GM23248 (cell line): ENCODE measurements at regions of chrX and their contacts with region 1.

Region 1: GRCh38 chrX:30275498-30275897 is 28.6 kb downstream of the MAGEB1 start:
- DNase-seq: peak; percentile 44
- H3K4me3 ChIP-seq: no peak overlapping the region
- H3K27ac ChIP-seq: no peak overlapping the region
- H3K4me1 ChIP-seq: no peaks in the 10 kb centered on the region; the same call in 1 of the 2 replicates
- H3K27me3 ChIP-seq: no peaks in the 10 kb centered on the region

Region 2: DNA sequence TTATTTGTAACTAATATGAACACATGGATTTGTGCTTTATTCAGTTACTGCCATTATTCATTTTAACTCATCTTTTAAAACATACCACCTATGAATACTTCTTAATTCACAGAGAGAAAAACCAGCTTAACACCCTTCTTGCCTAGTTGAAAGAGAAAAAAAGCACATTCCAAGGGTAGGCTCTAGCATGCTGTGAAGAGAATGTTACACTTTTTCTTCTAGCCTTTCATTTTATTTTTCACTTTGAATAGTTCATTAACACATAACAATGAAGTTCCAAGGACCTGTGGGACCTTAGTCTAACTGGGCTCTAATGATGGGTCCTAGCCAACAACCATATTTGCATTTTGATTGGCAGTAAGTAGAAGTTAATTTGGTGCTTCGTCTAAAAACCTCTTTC is 340.0 kb before region 1 on chrX:
- in situ Hi-C with region 1: no loop called
- DNase-seq: no peak
- H3K4me3 ChIP-seq: no peak overlapping the region
- H3K27ac ChIP-seq: no peak overlapping the region
- H3K4me1 ChIP-seq: no peaks in the 10 kb centered on the region
- H3K27me3 ChIP-seq: no peaks in the 10 kb centered on the region

Region 3: GRCh38 chrX:30039768-30040167 is 235.7 kb before region 1 on chrX:
- in situ Hi-C with region 1: no loop called
- DNase-seq: no peak
- H3K4me3 ChIP-seq: no peak overlapping the region
- H3K27ac ChIP-seq: no peak overlapping the region
- H3K4me1 ChIP-seq: no peaks in the 10 kb centered on the region
- H3K27me3 ChIP-seq: no peaks in the 10 kb centered on the region

Region 4: GRCh38 chrX:30504309-30504708 is 228.8 kb after region 1 on chrX:
- in situ Hi-C with region 1: loop called (anchors 10 kb)
- DNase-seq: peak; percentile 38
- H3K4me3 ChIP-seq: no peak overlapping the region
- H3K27ac ChIP-seq: no peak overlapping the region
- H3K4me1 ChIP-seq: no peaks in the 10 kb centered on the region
- H3K27me3 ChIP-seq: no peaks in the 10 kb centered on the region

Region 5: GRCh38 chrX:30652527-30653414 is 377.3 kb after region 1 on chrX:
- in situ Hi-C with region 1: no loop called
- DNase-seq: peak; percentile 95
- H3K4me3 ChIP-seq: peak overlapping the region; percentile 84
- H3K27ac ChIP-seq: peak overlapping the region; percentile 78
- H3K4me1 ChIP-seq: peaks cover 20% of the 10 kb centered on the region
- H3K27me3 ChIP-seq: no peaks in the 10 kb centered on the region

Region 6: DNA sequence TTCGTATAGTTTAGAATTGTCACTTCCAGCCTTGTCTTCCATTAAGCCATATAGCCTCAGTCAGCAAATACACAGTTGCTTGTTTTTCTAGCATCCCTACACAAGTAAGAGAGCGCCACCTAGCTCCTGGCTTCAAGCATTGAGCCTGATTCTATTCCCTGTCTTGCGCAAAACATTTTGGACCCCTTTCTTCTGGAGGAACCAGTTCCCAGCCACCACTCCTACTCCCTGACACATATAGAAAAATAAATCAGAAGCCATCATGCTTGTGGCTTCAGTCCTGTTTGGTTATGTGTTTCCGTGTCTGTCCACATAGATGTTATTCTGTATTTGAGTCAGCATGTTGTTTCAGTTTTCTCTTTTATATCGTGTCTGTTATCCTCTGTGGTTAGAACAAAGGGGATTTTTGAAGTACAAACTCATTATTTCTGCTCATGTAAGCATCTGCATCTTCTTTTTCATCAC is 437.6 kb after region 1 on chrX:
- in situ Hi-C with region 1: loop called (anchors 25 kb)
- DNase-seq: peak; percentile 73
- H3K4me3 ChIP-seq: no peak overlapping the region
- H3K27ac ChIP-seq: no peak overlapping the region
- H3K4me1 ChIP-seq: no peaks in the 10 kb centered on the region
- H3K27me3 ChIP-seq: no peaks in the 10 kb centered on the region